Posterior vena cava (tissue), 2 donors: ENCODE measurements at regions of chr5 and their contacts with region 1.

Region 1: GRCh38 chr5:90529194-90529938 is at the start of gene LYSMD3:
- DNase-seq: peak; percentile 99
- total RNA-seq, gene LYSMD3: 20.7 to 31.1 TPM

Region 2: DNA sequence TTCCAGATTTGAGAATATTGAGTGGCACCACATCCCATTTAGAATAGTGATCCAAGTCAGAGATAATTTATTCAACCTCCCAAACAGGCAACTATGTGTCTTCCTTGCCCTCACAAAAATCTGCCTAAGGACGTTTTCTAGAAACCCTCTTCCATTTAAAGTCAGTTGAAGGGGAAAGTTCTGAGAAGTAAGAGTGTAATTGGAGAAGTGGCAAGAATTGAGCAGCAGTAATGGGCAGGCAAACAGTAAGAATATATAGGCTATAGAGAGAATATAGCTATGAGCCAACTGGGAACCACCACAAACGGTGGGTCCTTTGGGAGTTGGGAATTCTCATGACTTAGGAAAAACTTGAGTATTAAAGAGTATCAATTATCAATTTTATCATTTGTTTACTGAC is 88.7 kb before region 1 on chr5:
- intact Hi-C with region 1: loop called in 1 of 2 experiments (anchors 5 kb)
- DNase-seq: no peak

Region 3: DNA sequence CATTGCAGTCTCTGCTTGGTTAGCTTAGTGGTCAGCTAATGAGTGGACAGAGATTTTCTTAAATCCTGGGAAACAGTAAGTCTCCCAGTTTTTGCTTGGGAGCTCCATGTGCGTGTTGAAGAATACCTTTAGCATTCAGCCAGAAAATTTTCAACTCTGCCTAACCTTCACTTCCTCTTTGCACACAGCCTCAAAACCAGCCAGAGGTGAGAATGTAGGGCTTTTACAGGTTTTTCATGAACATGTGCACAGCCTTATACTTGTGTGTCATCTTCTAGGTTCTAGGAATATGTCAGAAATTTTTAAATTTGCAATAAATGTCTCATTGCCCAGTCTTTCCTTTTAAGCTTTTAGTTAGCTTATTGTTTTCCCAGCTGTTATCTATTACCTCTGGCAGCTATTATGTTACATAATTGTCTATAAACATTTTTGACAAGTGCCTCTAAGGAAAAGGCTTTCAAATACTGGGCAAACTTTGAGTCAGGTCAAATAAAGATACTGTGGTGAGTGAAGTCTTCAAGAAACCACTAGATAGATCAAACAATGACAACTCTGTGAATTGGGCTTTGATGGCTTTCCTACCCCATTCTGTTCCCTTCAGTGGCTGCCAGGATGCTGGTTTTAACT is 41.9 kb after region 1 on chr5:
- intact Hi-C with region 1: no loop called
- DNase-seq: no peak

Region 4: GRCh38 chr5:91119981-91120850 is 590.9 kb after region 1 on chr5:
- intact Hi-C with region 1: no loop called
- DNase-seq: no peak